Activated T-helper 1 cell treated with anti-CD3 and anti-CD28 coated beads, Interleukin-12 subunit alpha, Interleukin-12 subunit beta, Interleukin-2, Interleukin-4 antibody, amounts not matched to agents 30 ng/mL and 10 ng/mL and 1 ng/mL, durations not matched to agents 14 hours and 24 hours and 36 hours (primary cell): ENCODE measurements at regions of chr6 and their contacts with region 1.

Region 1: DNA sequence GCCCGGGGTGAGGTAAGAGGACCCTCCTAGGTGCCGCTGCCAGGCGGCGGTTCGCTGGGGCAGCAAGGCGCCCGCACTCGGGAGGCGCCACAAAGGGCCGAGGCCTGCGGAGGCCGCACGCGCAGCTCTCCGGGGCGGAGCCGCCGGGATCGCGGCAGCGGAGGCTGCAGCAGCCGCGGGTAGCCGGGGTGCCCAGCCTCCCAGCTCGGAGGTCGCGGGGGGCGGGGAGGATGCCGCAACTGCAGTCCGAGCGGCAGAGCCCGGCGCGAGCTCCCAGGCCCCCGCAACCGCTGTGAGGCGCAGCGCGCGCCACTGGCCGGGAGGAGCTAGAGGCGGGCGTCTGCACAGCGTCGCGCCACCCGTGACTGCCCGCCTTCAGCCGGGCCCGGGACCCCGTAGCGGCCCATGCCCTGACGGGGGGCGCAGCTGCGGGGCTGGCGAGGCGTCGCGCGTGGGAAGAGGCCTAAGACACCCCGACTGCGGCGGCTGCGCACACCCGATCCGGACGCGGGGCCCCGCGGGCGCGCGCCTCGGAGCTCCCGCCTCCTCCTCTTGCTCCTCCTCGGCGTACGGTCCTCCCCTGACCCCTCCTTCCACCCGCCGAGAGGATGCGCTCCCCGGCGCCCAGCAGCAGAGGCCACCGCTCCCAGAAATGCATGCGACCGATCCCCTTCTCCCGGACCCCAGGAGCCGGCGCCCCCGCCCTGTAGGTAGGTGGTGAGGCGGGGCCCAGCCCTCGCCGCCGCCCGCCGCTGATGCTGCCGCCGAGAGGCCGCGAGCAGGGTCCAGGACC is at the start of gene NCOA7:
- DNase-seq: peak; percentile 78
- H3K4me3 Mint-ChIP-seq: peak within 1 kb of the TSS; percentile 91
- H3K27ac Mint-ChIP-seq: peak within 1 kb of the TSS; percentile 95
- H3K4me1 Mint-ChIP-seq: peaks cover 50% of the 10 kb centered on the region
- H3K27me3 Mint-ChIP-seq: no peaks in the 10 kb centered on the region
- total RNA-seq, gene NCOA7: 56.1 and 59.3 TPM in 2 replicates

Region 2: GRCh38 chr6:125077444-125077843 is 713.1 kb before region 1 on chr6:
- intact Hi-C with region 1: no loop called
- DNase-seq: no peak
- H3K4me3 Mint-ChIP-seq: no peak overlapping the region
- H3K27ac Mint-ChIP-seq: no peak overlapping the region
- H3K4me1 Mint-ChIP-seq: no peaks in the 10 kb centered on the region
- H3K27me3 Mint-ChIP-seq: no peaks in the 10 kb centered on the region

Region 3: DNA sequence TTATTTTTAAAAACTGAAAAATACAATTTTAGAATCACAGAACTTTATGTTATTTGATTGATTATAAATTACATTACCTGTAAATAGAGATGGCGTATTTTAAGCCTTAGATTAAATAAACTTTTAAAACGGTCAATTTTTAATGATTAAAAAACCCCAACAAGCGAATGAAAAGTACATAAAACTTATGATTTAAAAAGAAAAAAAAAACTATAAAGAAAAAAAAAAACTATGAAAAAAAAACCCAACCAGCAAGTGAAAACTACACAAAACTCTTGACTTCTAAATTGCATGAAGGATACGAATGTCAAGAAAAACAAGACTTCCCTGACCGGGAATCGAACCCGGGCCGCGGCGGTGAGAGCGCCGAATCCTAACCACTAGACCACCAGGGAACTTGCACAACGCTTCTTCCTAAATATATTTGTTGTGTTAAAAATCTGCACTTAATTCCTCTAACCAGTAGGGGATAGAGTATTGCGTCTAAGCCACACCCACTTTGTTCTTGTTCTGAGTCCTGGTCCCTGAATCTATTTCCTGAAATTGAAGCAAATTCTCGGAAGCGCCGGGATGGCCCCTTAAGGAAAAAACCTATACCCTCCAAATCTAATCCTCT is 10.5 kb before region 1 on chr6:
- intact Hi-C with region 1: loop called (anchors 1 kb)
- DNase-seq: peak; percentile 68
- H3K4me3 Mint-ChIP-seq: no peak overlapping the region
- H3K27ac Mint-ChIP-seq: no peak overlapping the region
- H3K4me1 Mint-ChIP-seq: peaks cover 12% of the 10 kb centered on the region
- H3K27me3 Mint-ChIP-seq: peaks cover 15% of the 10 kb centered on the region

Region 4: GRCh38 chr6:125858427-125859320 is 68.1 kb after region 1 on chr6:
- intact Hi-C with region 1: loop called (anchors 1 kb)
- DNase-seq: peak; percentile 6
- H3K4me3 Mint-ChIP-seq: no peak overlapping the region
- H3K27ac Mint-ChIP-seq: peak overlapping the region; percentile 9
- H3K4me1 Mint-ChIP-seq: no peaks in the 10 kb centered on the region
- H3K27me3 Mint-ChIP-seq: no peaks in the 10 kb centered on the region

Region 5: GRCh38 chr6:125918681-125919566 is 128.4 kb after region 1 on chr6:
- intact Hi-C with region 1: loop called (anchors 1 kb)
- DNase-seq: peak; percentile 66
- H3K4me3 Mint-ChIP-seq: peak overlapping the region; percentile 88
- H3K27ac Mint-ChIP-seq: peak overlapping the region; percentile 94
- H3K4me1 Mint-ChIP-seq: peaks cover 58% of the 10 kb centered on the region
- H3K27me3 Mint-ChIP-seq: no peaks in the 10 kb centered on the region

Region 6: DNA sequence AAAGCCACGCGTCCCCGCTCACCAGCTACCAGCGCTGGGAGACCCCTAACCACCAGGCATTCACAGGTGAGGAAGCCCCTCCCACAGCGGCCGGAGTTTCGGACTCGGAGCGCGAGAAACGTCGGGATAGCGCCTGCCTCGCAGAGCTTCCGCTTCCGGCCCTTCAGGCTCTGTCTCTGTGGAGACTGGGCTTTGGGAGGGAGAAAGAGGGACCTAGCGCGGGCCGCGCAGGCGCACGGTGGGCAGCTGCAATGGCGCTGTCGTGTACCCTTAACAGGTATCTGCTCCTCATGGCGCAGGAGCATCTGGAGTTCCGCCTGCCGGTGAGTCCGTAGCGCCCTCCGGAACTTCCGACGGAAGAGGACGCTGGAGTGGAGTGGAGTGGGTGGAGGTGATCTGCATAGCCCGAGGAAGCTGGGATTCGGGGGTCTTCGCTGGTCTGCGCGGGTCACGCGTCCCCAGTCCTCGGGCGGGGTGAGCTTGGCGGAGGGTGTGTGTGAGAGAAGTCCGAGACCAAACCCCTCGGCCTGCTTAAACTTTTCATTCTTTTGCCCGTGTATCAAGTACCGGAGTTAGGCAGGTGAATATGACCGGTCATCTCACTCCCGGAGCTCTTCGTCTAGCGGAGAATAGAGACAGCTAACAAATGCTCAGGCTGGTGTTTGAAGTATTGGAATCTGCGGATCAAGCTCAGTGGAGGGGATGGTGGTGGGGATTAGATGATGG is 195.9 kb after region 1 on chr6 and contains the start of gene TRMT11:
- intact Hi-C with region 1: loop called (anchors 1 kb)
- DNase-seq: peak; percentile 72
- H3K4me3 Mint-ChIP-seq: no peak within 1 kb of the TSS
- H3K27ac Mint-ChIP-seq: no peak within 1 kb of the TSS
- H3K4me1 Mint-ChIP-seq: peaks cover 8% of the 10 kb centered on the region
- H3K27me3 Mint-ChIP-seq: no peaks in the 10 kb centered on the region
- total RNA-seq, gene TRMT11: 27.9 and 29.1 TPM in 2 replicates

Region 7: DNA sequence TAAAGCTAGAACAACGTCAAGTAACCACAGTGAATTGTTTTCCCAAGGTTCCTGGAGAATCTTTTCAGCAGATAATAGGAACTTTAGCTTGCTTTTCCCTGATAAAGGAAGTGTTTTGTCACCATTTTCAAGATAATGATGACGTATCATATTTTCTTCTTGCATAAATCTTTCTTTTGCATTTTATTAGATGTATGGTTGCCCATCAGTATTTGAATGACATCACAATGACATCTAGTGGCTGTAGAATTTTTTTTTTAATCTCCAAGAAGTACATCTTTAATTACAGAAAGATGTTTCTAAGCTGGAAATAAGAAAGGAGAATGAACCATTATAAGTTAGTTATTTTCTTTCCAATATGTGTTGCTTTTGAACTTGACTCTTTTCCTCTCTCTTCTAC is 632.4 kb after region 1 on chr6:
- intact Hi-C with region 1: no loop called
- DNase-seq: no peak
- H3K4me3 Mint-ChIP-seq: no peak overlapping the region
- H3K27ac Mint-ChIP-seq: no peak overlapping the region
- H3K4me1 Mint-ChIP-seq: no peaks in the 10 kb centered on the region
- H3K27me3 Mint-ChIP-seq: no peaks in the 10 kb centered on the region

Region 8: DNA sequence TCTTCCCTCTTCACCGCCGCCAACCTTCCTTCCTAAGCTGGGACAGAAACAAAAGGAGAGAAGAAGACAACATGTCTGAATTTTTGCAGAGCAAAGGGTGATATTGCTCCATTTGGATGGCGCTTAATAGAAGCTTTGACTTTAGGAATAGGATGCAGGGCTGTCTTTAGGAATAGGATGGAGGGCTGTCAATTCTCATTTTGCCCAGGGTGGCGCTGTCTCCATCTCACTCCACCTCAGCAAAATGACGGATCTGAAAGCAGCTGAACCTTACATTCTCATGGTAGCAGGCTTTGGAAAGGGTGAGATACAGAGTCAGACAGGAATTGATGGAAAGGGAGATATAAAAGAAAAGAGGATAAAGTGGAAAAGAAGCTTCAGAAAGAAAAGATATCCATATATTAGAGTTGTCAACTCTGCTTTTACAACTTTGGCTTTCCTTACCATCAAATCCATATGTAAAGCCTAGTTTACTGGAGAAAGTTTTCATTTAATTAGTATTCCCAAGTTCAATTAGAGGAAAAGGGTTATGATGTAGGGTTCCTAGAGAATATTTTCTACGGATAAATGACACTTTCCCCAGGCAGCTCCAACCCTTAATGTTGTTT is 1726.2 kb after region 1 on chr6:
- intact Hi-C with region 1: loop called (anchors 10 kb)
- DNase-seq: peak; percentile 48
- H3K4me3 Mint-ChIP-seq: peak overlapping the region; percentile 90
- H3K27ac Mint-ChIP-seq: peak overlapping the region; percentile 70
- H3K4me1 Mint-ChIP-seq: peaks cover 54% of the 10 kb centered on the region
- H3K27me3 Mint-ChIP-seq: peaks cover 14% of the 10 kb centered on the region